Posterior vena cava (tissue), 2 donors: ENCODE measurements at regions of chr20 and their contacts with region 1.

Region 1: GRCh38 chr20:23245553-23246181 is 104.9 kb upstream of the NXT1 start:
- DNase-seq: peak; percentile 88

Region 2: GRCh38 chr20:23009636-23010035 is 236.0 kb before region 1 on chr20:
- intact Hi-C with region 1: no loop called
- DNase-seq: no peak

Region 3: GRCh38 chr20:23320317-23320716 is 74.7 kb after region 1 on chr20:
- intact Hi-C with region 1: loop called in 1 of 2 experiments (anchors 10 kb)
- DNase-seq: no peak

Region 4: GRCh38 chr20:23782366-23782985 is 536.8 kb after region 1 on chr20:
- intact Hi-C with region 1: no loop called
- DNase-seq: no peak